Calu3 (cell line): ENCODE measurements at regions of chr11 and their contacts with region 1.

Region 1: GRCh38 chr11:22920939-22921565 is 60.8 kb upstream of the CCDC179 start:
- DNase-seq: peak; percentile 41
- H3K4me3 Mint-ChIP-seq: no peak overlapping the region
- H3K27ac Mint-ChIP-seq: peak overlapping the region; percentile 22
- H3K4me1 Mint-ChIP-seq: peaks cover 21% of the 10 kb centered on the region
- H3K27me3 Mint-ChIP-seq: no peaks in the 10 kb centered on the region
- CTCF ChIP-seq: peak; percentile 58

Region 2: DNA sequence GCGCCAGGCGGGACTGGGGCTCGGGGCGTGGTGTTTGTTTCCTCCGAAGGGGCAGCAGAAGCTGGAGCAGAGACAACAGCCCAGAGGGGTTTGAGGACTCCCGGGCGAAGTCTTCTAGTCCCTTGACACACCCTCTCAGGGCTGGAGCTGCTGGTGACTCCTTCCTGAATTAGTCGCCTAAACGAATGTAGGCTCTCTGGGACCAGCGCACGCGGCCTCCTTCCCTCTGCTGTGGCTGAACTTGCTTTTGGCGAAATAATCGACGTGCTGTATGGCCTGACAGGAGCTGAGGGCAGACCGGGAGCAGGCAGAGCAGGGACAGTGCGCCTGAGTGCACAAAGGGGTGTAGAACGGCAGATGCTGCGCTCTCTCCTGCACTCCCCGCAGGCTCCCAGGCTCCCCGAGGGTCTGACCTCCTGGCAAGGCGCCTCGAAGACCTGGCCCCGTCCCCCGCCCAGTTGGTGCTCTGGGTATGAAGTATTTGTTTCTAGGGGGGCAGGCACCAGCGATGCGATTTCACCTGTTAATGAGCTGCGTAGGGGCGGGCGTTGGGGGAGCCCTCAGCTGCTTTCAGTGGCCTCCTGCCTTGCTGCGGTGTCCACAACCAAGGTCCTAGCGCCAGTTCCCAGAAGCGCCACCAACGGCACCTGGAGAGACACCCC is 577.5 kb before region 1 on chr11:
- CTCF ChIA-PET with region 1: no interaction called
- intact Hi-C with region 1: no loop called
- DNase-seq: peak; percentile 9
- H3K4me3 Mint-ChIP-seq: no peak overlapping the region
- H3K27ac Mint-ChIP-seq: no peak overlapping the region
- H3K4me1 Mint-ChIP-seq: no peaks in the 10 kb centered on the region
- H3K27me3 Mint-ChIP-seq: peaks cover 71% of the 10 kb centered on the region
- CTCF ChIP-seq: no peak

Region 3: GRCh38 chr11:23010790-23011335 is 89.8 kb after region 1 on chr11:
- CTCF ChIA-PET with region 1: no interaction called
- intact Hi-C with region 1: loop called (anchors 2 kb)
- DNase-seq: peak; percentile 12
- H3K4me3 Mint-ChIP-seq: no peak overlapping the region
- H3K27ac Mint-ChIP-seq: no peak overlapping the region
- H3K4me1 Mint-ChIP-seq: peaks cover 20% of the 10 kb centered on the region
- H3K27me3 Mint-ChIP-seq: no peaks in the 10 kb centered on the region
- CTCF ChIP-seq: no peak

Region 4: GRCh38 chr11:23509023-23509422 is 588.0 kb after region 1 on chr11:
- CTCF ChIA-PET with region 1: no interaction called
- intact Hi-C with region 1: no loop called
- DNase-seq: no peak
- H3K4me3 Mint-ChIP-seq: no peak overlapping the region
- H3K27ac Mint-ChIP-seq: no peak overlapping the region
- H3K4me1 Mint-ChIP-seq: no peaks in the 10 kb centered on the region
- H3K27me3 Mint-ChIP-seq: no peaks in the 10 kb centered on the region
- CTCF ChIP-seq: no peak